ENCODE measurements at regions of chr17 and their contacts with region 1.

Region 1: DNA sequence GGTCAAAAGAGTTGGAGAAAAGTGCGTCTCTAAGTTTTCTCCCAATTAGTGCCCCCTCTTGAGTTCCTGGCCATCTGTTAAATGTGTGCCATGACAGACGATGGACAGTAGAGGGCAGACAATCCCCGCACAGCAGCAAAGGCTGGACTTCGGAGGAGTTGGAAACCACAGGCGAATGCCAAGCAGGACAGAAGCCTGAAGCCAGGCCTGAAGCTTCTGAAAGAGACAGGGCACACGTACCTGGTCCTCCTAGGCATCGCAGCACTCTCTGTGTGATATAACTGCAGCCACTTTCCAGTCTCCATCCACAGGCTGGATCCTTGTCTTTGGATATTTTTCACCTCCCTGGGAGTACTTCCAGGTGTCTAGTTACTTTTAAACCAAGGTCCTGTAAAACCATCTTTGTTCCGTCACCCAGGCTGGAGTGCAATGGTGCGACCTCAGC is 14.5 kb downstream of the C17orf100 start:
- DNase-seq: peak; percentile 77
- ATAC-seq: peak; percentile 94

Region 2: DNA sequence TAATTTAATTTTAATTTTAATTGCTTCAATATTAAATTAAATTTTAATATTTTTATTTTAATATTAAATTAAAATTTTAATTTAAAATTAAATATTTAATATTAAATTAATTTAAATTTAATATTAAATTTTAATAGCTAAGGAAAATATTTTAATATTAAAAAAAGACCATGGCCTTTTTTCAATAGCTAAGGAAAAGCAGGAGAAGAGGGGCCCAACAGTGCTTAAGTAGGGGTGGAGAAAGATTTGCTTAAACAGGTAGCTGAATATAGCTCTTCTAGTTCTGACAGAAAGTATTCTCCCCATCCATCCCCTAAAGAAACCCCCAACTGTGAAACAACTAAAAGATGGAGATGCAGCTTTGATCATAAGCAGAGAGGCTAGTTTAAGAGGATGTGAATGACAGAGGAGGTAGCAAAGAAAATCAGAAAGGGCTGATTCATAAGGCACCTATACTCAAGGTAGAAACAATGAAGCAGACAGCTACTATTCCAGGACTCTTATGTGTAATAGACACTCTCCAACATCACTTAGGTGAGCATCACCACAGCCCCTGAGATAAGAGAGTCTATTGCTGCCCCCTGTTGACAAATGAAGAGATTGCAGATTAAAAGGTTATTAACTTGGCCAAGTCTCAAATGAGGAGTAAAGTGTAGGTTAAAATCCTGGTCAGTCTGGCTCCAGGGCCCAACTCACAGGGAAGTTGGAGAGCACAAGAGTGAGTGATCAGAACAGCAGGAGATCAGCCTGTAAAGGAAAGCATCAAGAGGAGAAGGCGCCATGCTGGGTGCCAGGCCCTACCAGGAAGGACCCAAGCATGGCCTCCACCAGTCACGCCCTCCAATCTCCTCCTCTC is 338.5 kb after region 1 on chr17:
- intact Hi-C with region 1: loop called (anchors 10 kb)
- DNase-seq: no peak
- ATAC-seq: peak; percentile 63